MCF 10A (cell line): ENCODE measurements at regions of chr5 and their contacts with region 1.

Region 1: DNA sequence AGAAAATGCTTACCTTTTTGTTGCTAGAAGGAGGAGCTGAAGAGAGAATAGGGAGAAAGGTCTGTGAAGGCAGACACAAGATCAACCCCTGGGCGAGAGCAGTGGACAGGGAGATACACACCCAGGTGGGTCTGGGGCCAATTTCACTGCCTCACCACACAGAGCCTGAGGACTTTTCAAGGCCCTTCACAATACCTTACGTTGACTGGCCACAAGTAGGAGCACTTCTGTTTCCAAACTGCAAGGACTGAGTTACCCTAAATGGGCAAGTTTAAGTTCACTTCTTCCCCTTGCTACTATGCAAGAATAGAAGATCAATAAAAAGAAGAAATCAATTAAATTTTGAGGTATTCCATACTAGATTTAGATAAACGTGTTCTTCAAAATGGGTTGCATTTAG is 174.5 kb upstream of the SLC12A2 start:
- DNase-seq: peak; percentile 84
- H3K4me3 Mint-ChIP-seq: no peak overlapping the region
- H3K27ac Mint-ChIP-seq: no peak overlapping the region
- H3K4me1 Mint-ChIP-seq: no peaks in the 10 kb centered on the region
- H3K27me3 Mint-ChIP-seq: no peaks in the 10 kb centered on the region
- CTCF ChIP-seq: peak; percentile 60

Region 2: GRCh38 chr5:127369796-127370195 is 539.3 kb before region 1 on chr5:
- CTCF ChIA-PET with region 1: no interaction called
- POLR2A ChIA-PET with region 1: no interaction called
- intact Hi-C with region 1: no loop called
- DNase-seq: no peak
- H3K4me3 Mint-ChIP-seq: no peak overlapping the region
- H3K27ac Mint-ChIP-seq: no peak overlapping the region
- H3K4me1 Mint-ChIP-seq: peaks cover 16% of the 10 kb centered on the region
- H3K27me3 Mint-ChIP-seq: peaks cover 26% of the 10 kb centered on the region
- CTCF ChIP-seq: no peak

Region 3: GRCh38 chr5:127892467-127893207 is 16.4 kb before region 1 on chr5:
- CTCF ChIA-PET with region 1: interaction called, 53 read pairs
- POLR2A ChIA-PET with region 1: interaction called, 5 read pairs
- intact Hi-C with region 1: no loop called
- DNase-seq: peak; percentile 82
- H3K4me3 Mint-ChIP-seq: no peak overlapping the region
- H3K27ac Mint-ChIP-seq: no peak overlapping the region
- H3K4me1 Mint-ChIP-seq: peaks cover 9% of the 10 kb centered on the region
- H3K27me3 Mint-ChIP-seq: no peaks in the 10 kb centered on the region
- CTCF ChIP-seq: no peak

Region 4: DNA sequence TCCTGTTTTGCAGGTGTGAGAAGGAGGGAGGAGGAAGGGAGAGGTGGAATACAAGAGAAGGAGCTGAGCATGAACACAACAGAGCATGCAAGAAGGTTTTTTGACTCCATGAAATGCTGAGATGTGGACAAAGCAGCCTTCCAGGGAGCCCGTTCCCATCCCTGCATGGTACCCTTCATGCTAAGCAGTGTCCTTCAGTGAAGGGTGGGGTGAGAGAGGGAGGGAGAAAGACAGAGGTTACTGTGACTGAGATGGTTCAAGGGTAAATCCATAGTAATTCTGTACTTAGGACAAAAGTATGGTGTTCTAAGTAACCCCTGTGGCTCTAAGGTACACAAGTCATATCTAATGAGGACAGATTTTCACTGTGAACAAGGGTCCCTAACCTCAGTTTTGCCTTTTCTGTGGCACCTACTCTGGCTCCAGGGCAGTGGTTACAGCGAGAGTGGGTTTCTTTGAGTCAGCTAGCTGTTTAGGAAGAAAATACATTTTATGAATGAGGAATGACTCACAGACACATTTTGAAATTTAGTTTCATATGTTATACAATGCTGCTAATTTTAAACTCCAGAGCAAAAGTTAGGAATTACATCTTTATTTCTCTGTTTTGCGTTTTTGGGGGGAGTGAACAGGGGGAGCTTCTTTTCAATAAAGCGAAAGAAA is 10.4 kb before region 1 on chr5:
- CTCF ChIA-PET with region 1: interaction called, 53 read pairs
- POLR2A ChIA-PET with region 1: interaction called, 5 read pairs
- intact Hi-C with region 1: no loop called
- DNase-seq: peak; percentile 47
- H3K4me3 Mint-ChIP-seq: no peak overlapping the region
- H3K27ac Mint-ChIP-seq: no peak overlapping the region
- H3K4me1 Mint-ChIP-seq: peaks cover 6% of the 10 kb centered on the region
- H3K27me3 Mint-ChIP-seq: no peaks in the 10 kb centered on the region
- CTCF ChIP-seq: no peak

Region 5: DNA sequence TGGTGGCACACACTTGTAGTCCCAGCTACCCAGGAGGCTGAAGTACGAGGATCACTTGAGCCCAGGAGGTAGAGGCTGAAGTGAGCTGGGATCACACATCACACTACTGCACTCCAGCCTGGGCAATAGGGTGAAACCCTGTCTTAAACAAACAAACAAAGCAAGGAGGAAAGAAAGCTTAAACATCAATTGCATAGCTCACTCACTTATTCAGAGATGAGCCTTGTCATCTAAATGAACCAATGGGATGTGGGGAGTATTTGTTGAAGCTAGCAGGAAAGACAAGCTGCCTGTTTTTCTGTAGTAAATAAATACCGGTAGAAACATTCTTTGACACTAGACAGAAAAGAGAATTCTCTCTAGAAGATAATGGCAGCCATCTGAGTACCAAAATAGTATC is 13.5 kb after region 1 on chr5:
- CTCF ChIA-PET with region 1: interaction called, 15 read pairs
- POLR2A ChIA-PET with region 1: interaction called, 5 read pairs
- intact Hi-C with region 1: no loop called
- DNase-seq: no peak
- H3K4me3 Mint-ChIP-seq: no peak overlapping the region
- H3K27ac Mint-ChIP-seq: no peak overlapping the region
- H3K4me1 Mint-ChIP-seq: peaks cover 21% of the 10 kb centered on the region
- H3K27me3 Mint-ChIP-seq: no peaks in the 10 kb centered on the region
- CTCF ChIP-seq: no peak

Region 6: DNA sequence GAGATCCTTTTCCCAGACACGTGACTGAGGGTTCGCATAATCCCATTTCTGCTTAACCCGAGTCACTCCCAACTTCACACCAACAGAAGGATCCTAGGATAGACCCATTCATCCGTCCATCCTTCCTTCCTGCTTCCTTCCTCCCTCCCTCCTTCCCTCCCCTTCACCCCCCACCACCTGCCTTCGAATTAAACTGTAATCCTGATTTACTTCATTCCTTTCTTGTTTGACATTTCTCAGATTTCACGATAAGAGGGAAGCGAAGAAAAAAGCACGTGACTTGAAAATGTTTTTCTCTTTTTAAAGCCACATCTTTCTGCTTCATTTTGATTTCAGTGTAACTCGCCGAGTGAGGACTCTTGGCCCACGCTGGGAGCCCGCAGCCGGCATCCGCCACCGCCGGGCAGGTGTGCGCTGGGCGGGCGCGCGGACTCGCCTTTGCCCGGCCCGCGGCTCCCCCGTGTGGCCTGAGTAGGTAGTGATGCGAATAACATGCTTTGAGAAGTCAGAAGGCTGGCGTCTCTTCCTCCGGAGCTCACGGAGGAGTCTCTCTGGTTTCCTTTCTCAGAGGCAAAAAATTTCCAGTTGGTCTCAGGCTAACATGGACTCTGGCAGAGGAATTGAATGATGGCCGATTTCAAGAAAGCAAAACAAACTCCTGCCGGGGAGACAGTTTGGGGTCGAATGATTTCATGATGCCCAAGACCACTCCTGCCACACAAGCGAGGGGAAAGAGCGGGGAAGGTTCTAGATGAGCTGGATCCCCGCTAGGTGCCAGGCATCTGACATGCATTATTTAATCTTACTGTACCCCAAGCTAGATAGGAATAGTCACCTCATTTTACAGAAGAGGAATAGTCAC is 292.2 kb after region 1 on chr5:
- CTCF ChIA-PET with region 1: interaction called, 6 read pairs
- POLR2A ChIA-PET with region 1: no interaction called
- intact Hi-C with region 1: loop called (anchors 1 kb)
- DNase-seq: peak; percentile 81
- H3K4me3 Mint-ChIP-seq: peak overlapping the region; percentile 42
- H3K27ac Mint-ChIP-seq: no peak overlapping the region
- H3K4me1 Mint-ChIP-seq: peaks cover 21% of the 10 kb centered on the region
- H3K27me3 Mint-ChIP-seq: no peaks in the 10 kb centered on the region
- CTCF ChIP-seq: peak; percentile 95